ENCODE measurements at regions of chr6 and their contacts with region 1.

Region 1: DNA sequence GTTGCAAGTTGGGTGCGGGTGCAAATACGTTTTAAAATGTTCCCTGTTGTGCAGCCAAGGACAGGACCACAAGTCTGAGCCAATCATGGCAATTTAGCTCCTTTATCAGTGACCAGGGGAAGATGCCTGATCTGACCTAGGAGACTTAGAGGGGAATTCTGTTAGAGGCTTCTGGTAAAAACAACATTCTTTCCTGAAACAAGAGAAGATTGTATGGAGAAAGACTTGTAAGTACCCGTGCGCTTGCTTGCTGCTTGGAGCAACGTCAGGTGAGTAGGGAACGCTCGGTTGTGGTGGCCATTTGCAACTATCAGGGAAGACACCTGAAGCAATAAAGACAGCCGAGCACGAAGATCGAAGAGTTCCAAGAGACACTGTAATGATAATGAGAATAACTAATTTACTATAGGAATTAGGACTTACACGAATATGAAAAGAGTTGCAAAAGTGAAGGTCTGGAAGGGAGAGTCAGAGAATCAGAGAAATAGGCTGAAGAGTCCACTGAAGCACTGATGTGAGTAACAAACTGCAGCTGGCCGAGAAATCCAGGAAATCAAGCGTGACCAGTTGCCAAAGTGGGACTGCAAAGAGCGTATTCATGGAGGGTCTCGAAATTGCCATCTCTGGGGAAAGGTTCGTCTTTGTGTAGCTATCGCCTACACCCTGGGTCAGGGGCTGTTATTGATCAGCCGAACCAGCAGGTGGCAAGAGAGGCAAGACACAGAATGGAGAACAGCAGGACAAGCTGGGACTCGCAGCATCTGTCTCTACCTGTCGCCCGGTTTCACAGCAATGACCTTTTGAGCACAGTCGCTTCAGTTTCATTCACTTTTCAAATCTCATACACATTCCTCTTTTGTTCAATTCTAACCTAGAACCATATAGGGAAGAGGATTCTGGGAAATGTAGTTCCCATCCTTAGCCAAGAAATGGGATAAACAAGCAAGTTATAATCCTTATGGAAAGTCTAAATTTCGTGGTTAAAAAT is 26.1 kb downstream of the LOC128125822 start:
- DNase-seq: peak; percentile 92
- H3K4me3 Mint-ChIP-seq: peak overlapping the region; percentile 90
- H3K27ac Mint-ChIP-seq: no peak overlapping the region
- H3K4me1 Mint-ChIP-seq: peaks cover 16% of the 10 kb centered on the region
- H3K27me3 Mint-ChIP-seq: peaks cover 5% of the 10 kb centered on the region

Region 2: GRCh38 chr6:63352587-63353285 is 245.6 kb before region 1 on chr6:
- intact Hi-C with region 1: loop called (anchors 2 kb)
- DNase-seq: peak; percentile 64
- H3K4me3 Mint-ChIP-seq: peak overlapping the region; percentile 47
- H3K27ac Mint-ChIP-seq: peak overlapping the region; percentile 26
- H3K4me1 Mint-ChIP-seq: peaks cover 12% of the 10 kb centered on the region
- H3K27me3 Mint-ChIP-seq: peaks cover 3% of the 10 kb centered on the region

Region 3: DNA sequence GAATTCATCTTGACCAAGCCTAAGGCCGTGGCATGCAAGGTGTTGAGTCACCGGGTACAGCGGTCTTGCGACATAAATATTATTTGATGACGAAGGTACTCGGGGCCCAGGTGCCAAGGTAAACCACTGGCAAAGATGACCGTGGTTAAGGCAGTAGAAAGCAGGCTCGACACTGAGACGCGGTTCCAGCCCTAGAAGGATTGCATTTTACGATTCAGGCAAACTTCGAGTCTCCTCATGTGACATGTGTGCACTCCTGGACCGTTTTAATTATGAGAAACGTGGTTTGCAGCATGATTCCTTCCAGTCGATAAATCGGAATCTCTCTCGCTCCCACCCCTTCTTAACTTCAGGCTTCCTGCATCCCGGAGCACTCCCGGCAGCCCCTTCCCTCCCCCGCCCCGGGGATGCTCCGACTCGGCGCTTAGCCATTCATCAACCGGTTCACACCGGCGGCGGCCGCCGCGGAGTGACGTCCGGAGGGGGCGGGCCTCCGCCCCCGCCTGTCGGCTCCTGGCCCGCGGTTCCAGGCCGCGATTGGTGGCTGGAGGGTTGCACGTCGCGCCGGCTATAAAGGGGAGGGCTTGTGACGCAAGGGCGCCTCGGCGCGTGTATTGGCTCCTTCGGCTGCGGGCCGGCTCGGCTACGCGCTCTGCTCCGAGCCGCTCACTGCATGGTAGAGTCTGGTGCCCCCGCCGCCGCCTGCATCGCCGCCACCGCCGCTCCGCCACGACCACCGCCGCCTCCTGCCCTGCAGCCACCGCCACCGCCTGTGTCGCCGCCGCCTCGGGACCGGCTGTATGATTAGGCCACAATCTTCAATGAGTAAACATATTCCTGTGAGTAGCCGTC is 26.2 kb before region 1 on chr6 and contains the starts of genes LOC128125822 and PTP4A1:
- intact Hi-C with region 1: loop called (anchors 1 kb)
- DNase-seq: peak; percentile 99
- H3K4me3 Mint-ChIP-seq: peak within 1 kb of the TSS; percentile 98
- H3K27ac Mint-ChIP-seq: peak within 1 kb of the TSS; percentile 96
- H3K4me1 Mint-ChIP-seq: peaks cover 27% of the 10 kb centered on the region
- H3K27me3 Mint-ChIP-seq: no peaks in the 10 kb centered on the region
- total RNA-seq, gene PTP4A1: 71.3 and 71.9 TPM in 2 replicates

Region 4: GRCh38 chr6:63635588-63636517 is 37.5 kb after region 1 on chr6 and contains the start of gene PHF3:
- intact Hi-C with region 1: loop called (anchors 1 kb)
- DNase-seq: peak; percentile 97
- H3K4me3 Mint-ChIP-seq: peak within 1 kb of the TSS; percentile 100
- H3K27ac Mint-ChIP-seq: peak within 1 kb of the TSS; percentile 100
- H3K4me1 Mint-ChIP-seq: peaks cover 33% of the 10 kb centered on the region
- H3K27me3 Mint-ChIP-seq: peaks cover 7% of the 10 kb centered on the region
- total RNA-seq, gene PHF3: 39.1 and 39.2 TPM in 2 replicates

Region 5: GRCh38 chr6:63685446-63686379 is 87.4 kb after region 1 on chr6:
- intact Hi-C with region 1: loop called (anchors 5 kb)
- DNase-seq: no peak
- H3K4me3 Mint-ChIP-seq: no peak overlapping the region
- H3K27ac Mint-ChIP-seq: peak overlapping the region; percentile 46
- H3K4me1 Mint-ChIP-seq: peaks cover 16% of the 10 kb centered on the region
- H3K27me3 Mint-ChIP-seq: no peaks in the 10 kb centered on the region

Region 6: GRCh38 chr6:63764318-63764916 is 166.1 kb after region 1 on chr6:
- intact Hi-C with region 1: loop called (anchors 1 kb)
- DNase-seq: peak; percentile 63
- H3K4me3 Mint-ChIP-seq: no peak overlapping the region
- H3K27ac Mint-ChIP-seq: no peak overlapping the region
- H3K4me1 Mint-ChIP-seq: no peaks in the 10 kb centered on the region
- H3K27me3 Mint-ChIP-seq: peaks cover 14% of the 10 kb centered on the region